ENCODE measurements at regions of chr7 and their contacts with region 1.

Region 1: DNA sequence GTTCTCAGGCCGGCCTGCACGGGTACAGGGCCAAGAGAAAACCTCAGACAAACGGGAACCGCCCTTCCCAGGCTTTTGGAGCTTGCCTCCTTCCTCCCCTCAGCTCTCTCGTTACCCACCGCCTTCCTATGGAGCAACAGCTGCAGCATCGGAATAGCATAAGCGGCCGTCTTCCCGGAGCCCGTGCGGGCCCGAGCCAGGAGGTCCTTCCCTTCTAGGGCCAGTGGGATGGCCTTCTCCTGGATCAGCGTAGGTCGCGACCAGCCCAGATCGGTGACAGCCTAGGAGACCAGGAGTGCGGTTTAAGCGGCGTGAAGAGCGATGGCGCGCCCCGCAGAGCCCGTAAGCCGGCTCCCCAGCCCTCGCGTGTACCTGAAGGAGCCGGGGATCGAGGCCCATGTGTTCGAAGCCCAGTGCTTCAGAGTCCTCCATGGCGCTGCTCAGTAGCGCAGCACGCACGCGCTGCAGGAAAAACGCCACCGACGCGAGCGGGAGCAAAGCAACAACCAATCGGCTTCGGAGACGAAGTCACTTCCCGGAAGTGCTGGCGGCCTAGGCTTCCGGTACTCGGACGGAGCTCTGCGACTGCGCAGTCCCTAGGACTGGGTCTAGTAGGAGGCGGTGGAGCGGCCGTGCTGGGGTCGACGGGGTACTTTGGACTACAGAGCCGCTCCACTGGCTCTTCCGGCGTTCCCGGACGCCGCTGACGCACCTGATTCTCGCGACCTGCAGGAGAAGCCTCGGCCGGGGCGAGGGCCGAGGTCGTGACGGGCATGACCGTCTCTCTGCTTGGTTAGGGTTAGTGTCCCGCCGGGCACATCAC is at the start of gene DDX56:
- DNase-seq: peak; percentile 92 to 97 (median 94)
- H3K4me3 ChIP-seq: peak within 1 kb of the TSS; percentile 60 to 100 (median 96)
- H3K27ac ChIP-seq: peak within 1 kb of the TSS; percentile 39 to 95 (median 83)
- H3K27me3 ChIP-seq: no peaks in the 10 kb centered on the region
- CTCF ChIP-seq: peak in 33 of 56 donors; percentile 9 to 56 (median 28)
- total RNA-seq, gene DDX56: 38.1 to 83.2 (median 61.5) TPM

Region 2: GRCh38 chr7:44072364-44073231 is 501.1 kb before region 1 on chr7:
- intact Hi-C with region 1: loop called in 1 of 2 experiments (anchors 5 kb)
- DNase-seq: peak; percentile 54 to 76 (median 62)
- H3K4me3 ChIP-seq: peak overlapping the region in 2 of 59 donors; percentile 48 to 54
- H3K27ac ChIP-seq: peak overlapping the region in 55 of 59 donors; percentile 16 to 93 (median 81)
- H3K27me3 ChIP-seq: no peaks in the 10 kb centered on the region
- CTCF ChIP-seq: peak; percentile 34 to 78 (median 62)

Region 3: GRCh38 chr7:44490351-44491200 is 83.1 kb before region 1 on chr7 and contains the start of gene NUDCD3:
- intact Hi-C with region 1: loop called (anchors 2 to 5 kb)
- DNase-seq: peak; percentile 69 to 88 (median 83)
- H3K4me3 ChIP-seq: peak within 1 kb of the TSS; percentile 65 to 100 (median 96)
- H3K27ac ChIP-seq: peak within 1 kb of the TSS; percentile 82 to 100 (median 98)
- H3K27me3 ChIP-seq: peaks cover 0 to 4% (median 0%) of the 10 kb centered on the region in 45 donors
- CTCF ChIP-seq: peak in 47 of 56 donors; percentile 1 to 72 (median 45)
- total RNA-seq, gene NUDCD3: 157 to 398 (median 298) TPM

Measured in dorsolateral prefrontal cortex (tissue), 120 donors.